HepG2 (cell line): ENCODE measurements at regions of chr2 and their contacts with region 1.

Region 1: DNA sequence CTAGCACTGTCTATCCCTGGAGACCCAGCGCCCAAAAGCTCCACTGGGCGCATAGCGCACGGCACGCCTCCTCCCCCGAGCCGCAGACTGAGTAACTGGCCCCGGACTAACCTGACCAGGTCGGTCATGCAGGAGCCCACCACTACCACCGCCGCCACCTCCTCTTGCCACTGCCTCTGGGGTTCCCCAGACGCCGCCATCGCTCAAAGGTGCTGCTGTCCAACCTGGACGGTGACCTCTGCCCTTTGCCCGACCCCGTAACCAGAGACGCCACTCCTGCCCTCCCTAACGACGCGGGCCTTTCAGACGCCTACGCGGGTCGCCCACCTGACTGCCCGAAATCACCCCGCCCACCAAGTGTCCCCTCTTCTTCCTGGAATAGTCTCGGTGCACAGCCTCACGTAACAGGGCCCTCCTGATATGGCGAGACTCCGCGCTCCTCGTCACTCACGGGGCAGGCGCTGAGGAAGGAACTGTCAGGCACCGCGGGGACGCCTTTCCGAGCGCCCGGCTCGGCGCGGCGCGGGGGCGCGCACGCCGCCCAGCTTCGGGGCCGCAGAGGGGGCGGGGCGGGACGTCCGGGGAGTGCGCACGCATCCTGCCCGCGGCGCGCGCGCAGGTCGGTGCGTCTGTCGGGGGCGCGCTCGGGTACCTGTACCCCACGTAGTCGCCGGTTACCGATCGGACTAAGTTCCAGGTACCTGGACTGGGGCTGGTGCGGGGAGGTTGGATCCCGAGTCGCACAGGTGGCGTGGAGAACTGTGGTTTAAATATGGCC is at the starts of genes BABAM2 and RBKS:
- DNase-seq: peak; percentile 89
- ATAC-seq: peak; percentile 89
- H3K4me3 ChIP-seq: peak within 1 kb of the TSS; percentile 92 to 93 (median 93)
- H3K27ac ChIP-seq: peak within 1 kb of the TSS; percentile 93
- H3K4me1 ChIP-seq: peaks cover 34% of the 10 kb centered on the region
- H3K27me3 ChIP-seq: no peaks in the 10 kb centered on the region; a peak in 1 of 5 replicates
- CTCF ChIP-seq: peak; percentile 17; the same call in 1 of the 2 replicates
- EP300 ChIP-seq: peak in 1 of 2 experiments; percentile 70; a peak in 1 of 4 replicates
- POLR2A ChIP-seq: peak; percentile 71 to 77
- RAD21 ChIP-seq: peak; percentile 60
- total RNA-seq, gene BABAM2: 24.9 and 34.8 TPM in 2 replicates
- total RNA-seq, gene RBKS: 7.7 and 11.7 TPM in 2 replicates

Region 2: DNA sequence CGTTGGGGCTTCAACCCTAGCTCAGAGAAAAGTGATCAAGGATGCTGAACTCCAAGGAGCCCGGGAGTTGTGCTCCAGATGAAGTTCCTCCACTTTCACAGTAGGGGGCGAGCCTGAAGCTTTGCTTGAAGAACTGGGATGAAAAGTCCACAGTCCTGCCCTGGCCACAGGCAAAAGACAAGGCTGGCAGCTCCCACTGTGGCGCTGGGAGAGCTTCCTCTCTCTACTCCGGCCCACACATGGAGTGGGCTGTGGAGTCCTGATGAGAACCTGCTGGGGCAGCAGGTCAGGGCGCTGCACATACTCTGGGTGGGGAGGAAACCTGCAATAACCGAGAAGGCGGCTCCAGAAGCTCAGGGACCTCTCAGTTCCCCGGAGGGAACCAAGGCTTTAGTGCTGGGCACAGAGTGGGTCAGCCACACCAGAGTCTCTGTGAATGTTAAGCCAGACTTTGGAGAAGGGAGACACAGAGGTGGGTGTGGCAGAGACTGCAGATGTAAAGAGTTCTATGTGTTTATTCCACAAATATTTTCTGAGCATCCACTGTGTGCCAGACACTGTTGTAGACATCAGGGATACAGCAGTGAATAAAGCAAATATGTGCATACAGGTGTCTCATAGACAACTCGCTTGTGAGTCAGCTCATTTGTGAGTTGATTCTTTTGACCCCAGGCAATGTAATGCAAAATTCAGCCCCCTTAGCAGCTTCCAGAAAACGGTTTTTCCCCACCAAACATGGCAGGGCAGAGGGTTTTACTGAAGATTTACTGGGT is 166.8 kb before region 1 on chr2:
- CTCF ChIA-PET with region 1: no interaction called
- POLR2A ChIA-PET with region 1: no interaction called
- in situ Hi-C with region 1: no loop called
- intact Hi-C with region 1: loop called (anchors 10 kb)
- DNase-seq: peak; percentile 75
- ATAC-seq: peak; percentile 79
- H3K4me3 ChIP-seq: peak overlapping the region; percentile 22 to 69 (median 33); a peak in 4 of 6 replicates
- H3K27ac ChIP-seq: no peak overlapping the region
- H3K4me1 ChIP-seq: peaks cover 58% of the 10 kb centered on the region
- H3K27me3 ChIP-seq: no peaks in the 10 kb centered on the region
- CTCF ChIP-seq: peak; percentile 94
- EP300 ChIP-seq: no peak
- POLR2A ChIP-seq: no peak
- RAD21 ChIP-seq: peak; percentile 85

Region 3: GRCh38 chr2:27875089-27875881 is 15.1 kb before region 1 on chr2:
- CTCF ChIA-PET with region 1: no interaction called
- POLR2A ChIA-PET with region 1: interaction called, 13 read pairs
- in situ Hi-C with region 1: no loop called
- intact Hi-C with region 1: no loop called
- DNase-seq: peak; percentile 84
- ATAC-seq: peak; percentile 91
- H3K4me3 ChIP-seq: no peak overlapping the region
- H3K27ac ChIP-seq: peak overlapping the region; percentile 5
- H3K4me1 ChIP-seq: peaks cover 30% of the 10 kb centered on the region
- H3K27me3 ChIP-seq: no peaks in the 10 kb centered on the region
- CTCF ChIP-seq: no peak
- EP300 ChIP-seq: peak; percentile 38 to 89; a peak in 3 of 4 replicates
- POLR2A ChIP-seq: no peak
- RAD21 ChIP-seq: no peak

Region 4: GRCh38 chr2:27929916-27930486 is 39.7 kb after region 1 on chr2:
- CTCF ChIA-PET with region 1: no interaction called
- POLR2A ChIA-PET with region 1: interaction called, 3 read pairs
- in situ Hi-C with region 1: no loop called
- intact Hi-C with region 1: loop called (anchors 5 kb)
- DNase-seq: peak; percentile 72
- ATAC-seq: peak; percentile 67
- H3K4me3 ChIP-seq: no peak overlapping the region
- H3K27ac ChIP-seq: peak overlapping the region; percentile 24
- H3K4me1 ChIP-seq: peaks cover 31% of the 10 kb centered on the region
- H3K27me3 ChIP-seq: no peaks in the 10 kb centered on the region
- CTCF ChIP-seq: no peak
- EP300 ChIP-seq: no peak
- POLR2A ChIP-seq: no peak
- RAD21 ChIP-seq: no peak

Region 5: DNA sequence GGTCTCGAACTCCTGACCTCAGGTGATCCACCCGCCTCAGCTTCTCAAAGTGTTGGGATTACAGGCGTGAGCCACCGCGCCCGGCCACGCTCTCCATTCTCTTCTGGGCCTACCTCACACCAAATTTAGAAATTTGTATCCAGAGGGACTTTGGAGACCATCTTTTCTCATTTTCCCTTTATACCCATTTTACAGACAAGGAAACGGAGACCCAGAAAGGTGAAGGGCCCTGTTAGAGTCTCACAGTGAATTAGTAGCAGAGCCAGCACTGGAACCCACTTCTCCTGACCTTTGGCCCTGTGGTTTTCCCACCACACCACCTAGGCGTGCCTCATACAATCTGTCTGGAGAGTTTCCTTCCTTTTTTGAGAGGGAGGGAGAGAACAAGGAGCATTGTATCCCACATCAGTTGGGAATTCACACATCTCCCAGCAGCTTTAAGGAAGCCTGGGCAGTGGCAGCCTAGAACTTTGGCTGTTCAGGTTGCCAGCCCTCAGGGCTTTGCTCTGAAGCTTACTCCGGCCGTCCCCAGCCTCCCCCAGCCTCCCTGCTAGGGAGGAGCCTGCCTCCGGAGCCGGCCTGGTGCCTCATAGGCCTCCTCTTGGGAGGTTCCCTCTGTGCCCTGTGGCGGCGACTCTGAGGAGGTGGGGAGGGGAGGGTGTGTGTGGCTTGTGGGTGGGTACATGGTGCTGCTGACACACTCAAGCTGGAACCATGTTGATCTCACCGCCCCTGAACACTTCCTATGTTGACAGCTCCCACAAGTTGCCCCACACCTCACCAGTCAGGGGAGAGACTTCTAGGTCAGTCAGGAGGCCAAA is 516.2 kb after region 1 on chr2:
- CTCF ChIA-PET with region 1: no interaction called
- POLR2A ChIA-PET with region 1: interaction called, 5 read pairs
- in situ Hi-C with region 1: loop called (anchors 10 kb)
- intact Hi-C with region 1: no loop called
- DNase-seq: no peak
- ATAC-seq: no peak; the same call in 2 of the 3 replicates
- H3K4me3 ChIP-seq: no peak overlapping the region
- H3K27ac ChIP-seq: peak overlapping the region; percentile 38
- H3K4me1 ChIP-seq: peaks cover 44% of the 10 kb centered on the region
- H3K27me3 ChIP-seq: no peaks in the 10 kb centered on the region
- CTCF ChIP-seq: no peak
- EP300 ChIP-seq: no peak
- POLR2A ChIP-seq: no peak
- RAD21 ChIP-seq: no peak